ENCODE measurements at regions of chr7 and their contacts with region 1.

Region 1: GRCh38 chr7:36152756-36153570 is at the start of gene EEPD1:
- DNase-seq: peak; percentile 100
- H3K4me3 ChIP-seq: peak within 1 kb of the TSS; percentile 72 to 86 (median 76)
- H3K27ac ChIP-seq: peak within 1 kb of the TSS; percentile 89 to 97 (median 91)
- H3K4me1 ChIP-seq: peaks cover 0 to 50% (median 46%) of the 10 kb centered on the region in 4 donors
- H3K27me3 ChIP-seq: no peaks in the 10 kb centered on the region
- CTCF ChIP-seq: no peak
- EP300 ChIP-seq: peak in 1 of 4 donors; percentile 4
- POLR2A ChIP-seq: peak; percentile 51 to 55
- total RNA-seq, gene EEPD1: 10.9 to 18.1 (median 13.5) TPM

Region 2: GRCh38 chr7:35801392-35802101 is 351.4 kb before region 1 on chr7:
- intact Hi-C with region 1: loop called (anchors 5 kb)
- DNase-seq: peak; percentile 86
- H3K4me3 ChIP-seq: peak overlapping the region; percentile 83 to 93 (median 86)
- H3K27ac ChIP-seq: peak overlapping the region; percentile 94 to 98 (median 96)
- H3K4me1 ChIP-seq: peaks cover 0 to 55% (median 45%) of the 10 kb centered on the region in 4 donors
- H3K27me3 ChIP-seq: no peaks in the 10 kb centered on the region
- CTCF ChIP-seq: peak; percentile 25 to 57 (median 40)
- EP300 ChIP-seq: no peak
- POLR2A ChIP-seq: no peak

Region 3: DNA sequence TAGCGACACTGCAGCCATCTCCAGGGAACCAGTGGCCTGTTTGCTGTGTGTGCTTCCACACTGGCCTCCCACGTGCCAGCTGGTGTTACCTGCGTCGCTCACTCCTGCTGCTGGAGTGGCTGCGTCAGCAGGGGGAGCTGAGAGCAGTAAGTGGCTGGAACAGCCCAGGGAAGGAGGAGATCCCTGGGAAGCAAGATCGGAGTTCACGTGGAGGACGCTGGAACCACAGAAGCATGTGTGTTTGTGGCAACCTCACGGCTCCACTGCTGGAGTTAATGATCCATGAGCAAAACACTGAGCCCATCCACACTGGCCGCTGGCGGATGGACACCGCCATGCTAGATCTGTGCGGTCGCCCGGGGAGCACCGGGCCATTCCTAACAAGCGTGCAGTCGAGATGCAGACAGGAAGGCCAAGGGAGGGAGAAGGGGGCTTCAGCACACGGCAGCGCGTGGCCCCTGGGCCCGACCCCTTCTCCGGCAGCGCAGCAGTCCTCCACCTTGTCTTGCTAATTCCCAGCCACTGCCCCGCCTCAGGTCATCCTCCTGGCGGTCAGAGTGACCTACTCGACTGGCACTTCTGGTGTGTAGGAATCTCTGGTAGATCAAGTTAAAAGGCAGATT is 68.4 kb before region 1 on chr7:
- intact Hi-C with region 1: loop called (anchors 2 kb)
- DNase-seq: peak; percentile 72
- H3K4me3 ChIP-seq: no peak overlapping the region
- H3K27ac ChIP-seq: no peak overlapping the region
- H3K4me1 ChIP-seq: no peaks in the 10 kb centered on the region
- H3K27me3 ChIP-seq: no peaks in the 10 kb centered on the region
- CTCF ChIP-seq: peak in 2 of 4 experiments; percentile 53 to 61
- EP300 ChIP-seq: no peak
- POLR2A ChIP-seq: no peak

Region 4: DNA sequence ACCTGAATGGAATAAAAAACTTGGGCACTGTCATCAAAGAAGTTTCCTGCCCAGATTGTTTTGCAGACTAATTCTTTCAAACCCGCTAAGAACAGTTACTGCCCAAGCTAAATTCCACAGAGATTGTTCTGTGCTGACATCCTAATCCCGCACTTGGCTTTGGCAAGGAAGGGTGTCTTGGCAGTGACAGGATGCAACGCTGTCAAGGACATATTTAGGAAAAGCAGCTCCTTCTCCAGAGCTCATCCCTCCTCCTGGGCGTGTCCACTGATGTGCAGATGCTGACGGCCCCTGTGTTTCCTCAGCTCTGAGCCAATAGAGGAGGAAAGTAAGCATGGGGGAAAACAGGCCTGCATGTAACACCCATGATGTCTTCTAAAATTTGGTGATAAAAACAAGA is 74.3 kb after region 1 on chr7:
- intact Hi-C with region 1: loop called (anchors 5 kb)
- DNase-seq: peak; percentile 93
- H3K4me3 ChIP-seq: no peak overlapping the region
- H3K27ac ChIP-seq: no peak overlapping the region
- H3K4me1 ChIP-seq: peaks cover 0 to 44% (median 11%) of the 10 kb centered on the region in 4 donors
- H3K27me3 ChIP-seq: no peaks in the 10 kb centered on the region
- CTCF ChIP-seq: no peak
- EP300 ChIP-seq: peak in 2 of 4 donors; percentile 36 to 61
- POLR2A ChIP-seq: no peak

Region 5: DNA sequence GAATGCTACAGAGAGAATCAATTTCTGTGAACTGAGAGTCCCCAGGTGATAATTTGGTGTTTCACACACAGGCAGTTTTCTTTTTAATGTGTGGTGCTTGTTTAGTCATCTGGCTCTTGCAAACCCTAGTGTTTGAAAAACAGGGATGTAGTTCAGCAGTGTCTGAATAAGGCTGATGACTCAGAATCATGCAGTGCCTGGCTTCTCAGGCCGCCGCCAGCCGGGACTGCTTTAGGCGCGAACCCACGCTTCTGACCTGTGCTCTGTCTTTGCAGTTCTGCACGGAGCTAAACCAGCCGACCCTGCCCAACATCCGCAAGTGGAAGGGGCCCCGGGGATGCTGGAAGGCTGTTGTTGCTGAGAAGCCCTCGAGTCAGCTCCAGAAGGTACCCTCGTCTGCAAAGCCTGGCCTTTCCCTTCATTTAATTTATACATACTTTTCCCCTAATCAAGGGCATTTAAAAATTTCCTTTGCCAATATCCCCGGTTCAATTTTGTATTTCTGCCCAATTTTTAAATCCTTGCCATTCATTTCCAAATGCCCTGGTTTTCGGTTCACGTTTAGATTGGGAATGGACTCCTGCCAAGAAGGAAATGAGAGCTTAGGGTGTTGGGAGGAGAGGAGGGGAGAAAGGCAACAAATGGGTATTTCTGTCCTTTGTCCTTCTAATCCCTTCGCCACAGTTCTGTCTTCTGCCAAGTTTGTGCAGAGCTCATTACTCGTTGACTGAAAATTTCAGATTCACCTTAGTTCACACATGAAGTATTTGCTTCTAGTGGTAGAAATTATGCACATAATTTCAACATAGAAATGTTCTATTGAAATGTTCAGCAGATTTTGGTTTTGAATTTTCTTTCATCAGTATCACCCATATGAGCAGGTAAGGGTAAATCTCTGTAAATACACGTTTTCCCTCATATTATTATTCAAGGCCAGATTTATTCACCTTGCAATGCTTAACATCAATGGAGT is 128.2 kb after region 1 on chr7:
- intact Hi-C with region 1: loop called (anchors 1 kb)
- DNase-seq: peak; percentile 90
- H3K4me3 ChIP-seq: peak overlapping the region in 2 of 4 donors; percentile 23 to 27
- H3K27ac ChIP-seq: peak overlapping the region; percentile 72 to 86 (median 82)
- H3K4me1 ChIP-seq: peaks cover 0 to 79% (median 70%) of the 10 kb centered on the region in 4 donors
- H3K27me3 ChIP-seq: no peaks in the 10 kb centered on the region
- CTCF ChIP-seq: peak in 1 of 4 experiments; percentile 9
- EP300 ChIP-seq: peak in 1 of 4 donors; percentile 49
- POLR2A ChIP-seq: no peak